ENCODE measurements at regions of chr1 and their contacts with region 1.

Region 1: DNA sequence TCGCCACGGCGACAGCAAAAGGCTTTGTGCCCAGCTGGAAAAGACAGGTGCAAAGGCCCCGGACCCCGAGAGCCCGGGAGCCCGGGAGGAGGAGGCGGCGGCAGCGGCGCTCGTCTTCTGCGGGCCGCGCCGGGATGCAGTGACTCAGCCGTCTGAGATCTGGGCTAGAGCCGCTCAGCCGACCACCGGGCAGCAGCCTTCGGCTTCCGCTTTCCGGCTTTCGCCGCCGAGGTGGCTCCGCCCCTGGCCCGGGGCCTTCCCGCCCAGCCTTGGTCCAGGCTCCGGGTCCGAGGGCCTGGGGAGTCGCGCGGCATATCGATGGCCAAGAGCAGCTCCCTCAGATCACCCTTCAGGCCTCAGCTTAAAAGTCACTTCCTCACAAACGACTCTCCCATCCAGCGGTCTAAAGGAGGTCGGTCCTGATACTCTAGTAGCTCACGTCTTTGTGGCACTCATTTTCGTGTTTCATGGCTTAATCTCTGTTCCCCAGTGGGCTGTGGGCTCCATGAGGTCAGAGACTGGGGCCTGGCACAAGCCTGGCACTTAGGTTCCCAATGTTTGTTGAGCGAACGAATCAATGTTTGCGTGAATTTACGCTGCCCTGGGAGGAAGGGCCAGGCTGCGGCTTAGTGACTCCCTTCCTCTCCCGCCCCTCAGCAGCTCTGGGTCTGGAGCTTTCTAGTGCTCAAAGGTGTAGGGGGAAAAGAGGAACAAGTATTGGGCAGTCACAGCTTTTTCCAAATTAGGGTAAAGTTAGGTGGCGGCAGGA is at the start of gene PHTF1:
- DNase-seq: peak; percentile 89
- H3K4me3 ChIP-seq: peak within 1 kb of the TSS; percentile 86 to 89
- H3K27ac ChIP-seq: peak within 1 kb of the TSS; percentile 95 to 98
- H3K4me1 ChIP-seq: peaks cover 9 to 11% of the 10 kb centered on the region in 2 experiments; a peak in 3 of 4 replicates
- H3K27me3 ChIP-seq: no peaks in the 10 kb centered on the region
- CTCF ChIP-seq: no peak
- EP300 ChIP-seq: no peak
- RAD21 ChIP-seq: no peak
- polyA plus RNA-seq, gene PHTF1: 10.8 and 14.1 TPM in 2 replicates

Region 2: DNA sequence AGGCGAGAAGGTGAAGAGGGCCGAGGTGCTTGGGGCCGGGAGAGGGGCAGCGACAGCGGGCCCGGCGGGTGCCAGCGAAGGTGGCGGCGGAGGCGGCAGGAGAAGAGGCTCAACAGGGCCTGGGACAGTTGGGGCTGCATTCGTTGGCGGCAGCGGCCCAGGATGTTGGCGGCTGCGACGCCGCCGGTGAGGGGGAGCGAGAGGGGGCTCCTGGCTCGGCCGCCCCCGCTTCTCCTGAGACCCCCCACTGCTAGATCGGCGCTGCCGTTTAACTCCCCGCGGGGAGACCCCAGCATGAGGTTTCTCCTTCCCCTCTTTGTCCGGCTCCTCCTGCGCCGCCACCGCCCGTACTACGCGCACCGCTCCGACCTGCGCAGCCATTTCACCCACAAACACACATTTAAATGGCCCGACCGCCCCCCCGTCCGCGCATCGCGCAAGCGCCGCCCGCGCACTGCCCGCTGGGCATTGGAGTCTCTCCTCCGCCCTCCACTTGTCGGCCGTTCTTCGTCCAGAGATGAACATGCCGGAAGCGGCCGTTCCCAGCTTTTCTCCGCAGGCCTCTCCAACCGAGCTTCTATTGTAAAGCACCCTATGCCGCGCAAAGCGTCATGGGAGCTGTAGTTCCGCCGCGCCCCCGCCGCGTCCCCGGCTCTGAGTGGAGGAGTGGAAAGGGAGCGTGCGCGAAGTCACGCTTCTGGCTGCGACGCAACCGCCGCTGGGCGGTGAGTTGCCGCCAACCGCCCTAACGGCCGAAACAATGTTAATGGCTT is 52.6 kb after region 1 on chr1 and contains the start of gene RSBN1:
- CTCF ChIA-PET with region 1: no interaction called
- POLR2A ChIA-PET with region 1: interaction called, 22 read pairs
- DNase-seq: peak; percentile 92
- H3K4me3 ChIP-seq: peak within 1 kb of the TSS; percentile 81 to 88
- H3K27ac ChIP-seq: peak within 1 kb of the TSS; percentile 75 to 96
- H3K4me1 ChIP-seq: peaks cover 5 to 17% of the 10 kb centered on the region in 2 experiments; a peak in 3 of 4 replicates
- H3K27me3 ChIP-seq: no peaks in the 10 kb centered on the region
- CTCF ChIP-seq: no peak
- EP300 ChIP-seq: peak in 1 of 2 experiments; percentile 59; a peak in 1 of 4 replicates
- RAD21 ChIP-seq: no peak
- polyA plus RNA-seq, gene RSBN1: 3.9 and 4.0 TPM in 2 replicates